Psoas muscle (tissue), 8 donors: ENCODE measurements at regions of chr3 and their contacts with region 1.

Region 1: GRCh38 chr3:111717601-111718000 is 122.5 kb upstream of the ZBED2 start:
- DNase-seq: peak; percentile 63 to 80
- ATAC-seq: peak; percentile 94 to 99 (median 96)
- H3K4me3 ChIP-seq: no peak overlapping the region
- H3K27ac ChIP-seq: no peak overlapping the region
- H3K4me1 ChIP-seq: peaks cover 4% of the 10 kb centered on the region
- H3K27me3 ChIP-seq: no peaks in the 10 kb centered on the region
- CTCF ChIP-seq: peak; percentile 98

Region 2: DNA sequence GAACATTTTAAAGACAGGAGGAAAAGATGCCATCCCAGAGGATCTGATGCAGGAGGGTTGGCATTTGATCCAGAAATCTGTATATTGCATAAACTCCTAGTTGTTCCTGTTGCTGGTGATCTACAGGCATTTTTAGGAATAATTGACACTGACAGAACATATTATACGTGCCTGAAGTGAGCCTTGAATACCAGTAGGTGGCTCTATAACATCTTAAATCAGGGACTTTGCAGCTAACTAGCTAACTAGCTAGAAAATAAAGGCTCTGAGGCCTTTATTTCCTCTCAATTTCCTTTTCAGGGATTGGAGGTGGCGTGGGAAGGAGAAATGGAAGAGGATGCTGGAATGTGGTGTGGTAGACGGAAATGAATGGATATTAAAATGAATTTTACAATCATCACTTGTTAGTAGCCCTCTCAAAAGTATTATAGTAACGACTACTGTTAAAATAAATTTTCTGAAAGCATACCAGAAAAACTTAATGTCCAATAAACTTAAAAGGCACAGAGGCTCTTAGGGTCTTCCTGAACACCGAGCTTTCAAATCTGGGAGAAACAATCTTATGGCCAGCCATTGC is 48.6 kb before region 1 on chr3:
- intact Hi-C with region 1: loop called in 1 of 2 experiments (anchors 2 kb)
- DNase-seq: no peak
- ATAC-seq: peak; percentile 51 to 88 (median 70)
- H3K4me3 ChIP-seq: no peak overlapping the region
- H3K27ac ChIP-seq: no peak overlapping the region
- H3K4me1 ChIP-seq: peaks cover 3% of the 10 kb centered on the region
- H3K27me3 ChIP-seq: no peaks in the 10 kb centered on the region
- CTCF ChIP-seq: peak; percentile 81

Region 3: DNA sequence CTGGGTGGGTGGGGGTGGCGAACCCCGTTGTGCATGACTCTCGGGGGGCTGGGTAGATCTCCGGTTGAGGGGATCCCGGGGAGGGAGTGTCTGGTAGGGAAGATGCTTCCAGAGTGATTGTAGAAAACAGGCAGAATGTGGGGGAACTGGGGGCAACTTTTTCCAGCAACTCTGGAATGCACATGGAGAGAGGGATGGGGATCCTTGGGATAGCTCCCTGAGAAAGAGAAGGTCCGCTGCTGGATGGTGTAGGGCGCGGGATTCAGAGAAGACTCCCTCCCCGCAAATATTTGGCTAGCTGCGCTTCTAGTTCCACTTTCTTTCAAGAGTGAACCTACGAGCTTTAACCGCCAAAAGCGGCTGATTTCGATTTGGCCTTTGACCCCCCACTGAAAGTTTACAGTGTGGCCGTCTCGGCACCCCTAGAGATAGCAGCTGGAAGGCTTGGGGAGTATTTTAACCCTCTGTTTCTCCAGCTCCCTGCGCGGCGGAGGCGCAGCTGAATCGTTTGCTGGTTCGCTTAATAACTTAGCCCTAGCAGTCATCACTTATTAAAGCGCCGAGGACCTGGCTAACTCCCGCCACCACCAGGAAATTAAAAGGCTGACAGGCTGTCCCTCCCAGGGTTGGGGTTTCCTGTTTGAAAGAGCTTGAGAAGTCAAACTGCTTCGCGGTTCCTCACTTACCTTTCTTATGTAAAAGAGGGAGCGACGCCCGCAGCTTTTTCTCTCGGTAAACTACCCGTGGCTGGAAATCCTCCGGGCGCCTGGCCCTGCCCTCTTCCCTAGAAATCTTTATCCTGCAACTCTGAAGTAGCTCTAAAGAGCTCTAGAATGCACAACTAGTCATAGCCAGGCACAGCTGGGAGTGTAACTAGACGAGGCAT is 142.6 kb after region 1 on chr3:
- intact Hi-C with region 1: loop called (anchors 1 to 5 kb)
- DNase-seq: peak; percentile 58 to 78
- ATAC-seq: peak; percentile 80 to 85 (median 81)
- H3K4me3 ChIP-seq: peak overlapping the region; percentile 76
- H3K27ac ChIP-seq: peak overlapping the region; percentile 78
- H3K4me1 ChIP-seq: no peaks in the 10 kb centered on the region
- H3K27me3 ChIP-seq: peaks cover 0 to 49% (median 8%) of the 10 kb centered on the region in 3 donors
- CTCF ChIP-seq: peak; percentile 49